Activated T-helper 1 cell treated with anti-CD3 and anti-CD28 coated beads, Interleukin-12 subunit alpha, Interleukin-12 subunit beta, Interleukin-2, Interleukin-4 antibody, amounts not matched to agents 30 ng/mL and 10 ng/mL and 1 ng/mL, durations not matched to agents 14 hours and 24 hours and 36 hours (primary cell): ENCODE measurements at regions of chr1 and their contacts with region 1.

Region 1: DNA sequence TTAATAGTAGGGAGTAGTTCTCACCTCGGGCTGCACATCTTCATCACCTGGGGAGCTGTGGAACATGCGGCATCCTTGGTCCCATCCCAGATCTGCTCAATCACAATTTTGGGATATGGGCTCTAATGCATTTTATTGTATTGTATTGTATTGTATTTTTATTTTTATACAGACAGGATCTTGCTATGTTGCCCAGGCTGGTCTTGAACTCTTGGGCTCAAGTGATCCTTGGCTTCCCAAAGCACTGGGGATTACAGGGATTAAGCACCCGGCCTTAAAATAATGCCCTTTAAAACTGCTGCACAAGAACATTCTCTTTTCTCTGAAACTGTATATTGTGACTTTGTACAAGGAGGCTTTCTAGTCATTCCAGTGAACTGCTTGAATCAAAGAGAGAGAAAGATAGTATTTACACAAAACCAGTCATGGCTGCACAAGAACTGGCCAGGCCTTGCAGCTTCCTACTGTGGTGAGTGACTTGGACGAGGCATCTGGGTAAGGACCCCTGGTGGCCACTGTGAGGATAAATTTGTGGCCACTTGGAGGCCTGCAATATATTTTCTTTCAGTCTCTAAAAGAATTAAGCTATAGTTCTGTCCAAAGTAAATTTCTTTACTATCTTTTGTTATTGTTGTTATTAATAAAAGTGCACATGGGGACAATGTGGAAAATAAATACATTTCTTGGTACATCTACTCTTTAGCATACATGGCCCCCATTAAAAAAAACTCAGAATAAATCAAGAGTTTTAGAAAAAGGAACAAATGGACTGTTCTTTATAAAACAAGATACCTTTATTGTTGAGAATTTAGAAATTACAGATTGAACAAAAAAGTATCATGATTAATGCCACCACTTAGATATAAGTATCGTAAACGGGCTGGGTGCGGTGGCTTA is 48.0 kb downstream of the TBCE start:
- DNase-seq: peak; percentile 36
- H3K4me3 Mint-ChIP-seq: no peak overlapping the region
- H3K27ac Mint-ChIP-seq: no peak overlapping the region
- H3K4me1 Mint-ChIP-seq: no peaks in the 10 kb centered on the region
- H3K27me3 Mint-ChIP-seq: no peaks in the 10 kb centered on the region

Region 2: DNA sequence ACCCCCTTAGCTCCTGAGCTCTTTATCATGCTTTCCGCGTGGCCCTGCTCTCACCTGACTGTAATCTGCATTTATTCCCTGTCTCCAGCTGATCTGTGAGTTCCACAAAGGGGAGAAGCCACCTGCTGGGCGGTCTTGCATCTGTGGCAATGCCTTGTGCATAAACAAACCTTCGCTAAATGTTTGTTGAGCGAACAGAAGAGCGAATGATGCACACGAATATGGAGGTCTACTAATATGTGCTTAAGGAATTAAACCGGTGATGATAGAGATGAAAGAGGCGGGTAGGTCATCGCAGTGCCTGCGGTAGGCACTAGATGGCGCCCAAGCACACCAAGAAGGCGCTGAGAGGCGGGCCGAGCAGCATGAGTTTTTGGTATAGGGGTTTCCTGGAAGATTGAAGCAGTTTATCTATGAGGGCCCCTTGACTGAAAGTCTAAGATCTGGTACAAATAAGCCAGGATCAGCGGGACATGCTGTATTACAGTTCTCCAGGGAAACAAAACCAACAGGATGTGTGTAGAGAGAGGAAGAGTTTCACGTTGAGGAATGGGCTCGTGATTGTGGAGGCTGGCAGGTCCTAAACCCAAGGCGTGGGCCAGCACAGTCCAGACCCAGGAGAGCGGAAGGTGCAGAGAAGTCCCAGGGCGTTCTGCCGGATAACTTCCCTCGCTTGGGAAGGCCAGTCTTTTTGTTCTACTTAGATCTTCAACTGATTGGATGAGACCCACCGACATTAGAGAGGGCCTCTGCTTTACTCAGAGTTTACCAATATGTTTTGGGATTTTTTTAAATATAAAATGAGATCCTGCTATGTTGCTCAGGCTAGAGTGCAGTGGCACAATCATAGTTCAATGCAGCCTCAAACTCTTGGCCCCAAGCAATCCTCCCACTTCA is 321.3 kb before region 1 on chr1:
- intact Hi-C with region 1: loop called (anchors 1 kb)
- DNase-seq: peak; percentile 69
- H3K4me3 Mint-ChIP-seq: no peak overlapping the region
- H3K27ac Mint-ChIP-seq: peak overlapping the region; percentile 31
- H3K4me1 Mint-ChIP-seq: peaks cover 13% of the 10 kb centered on the region
- H3K27me3 Mint-ChIP-seq: no peaks in the 10 kb centered on the region

Region 3: GRCh38 chr1:235160957-235161684 is 254.1 kb before region 1 on chr1 and contains the start of gene RBM34:
- intact Hi-C with region 1: loop called (anchors 1 kb)
- DNase-seq: peak; percentile 92
- H3K4me3 Mint-ChIP-seq: peak within 1 kb of the TSS; percentile 98
- H3K27ac Mint-ChIP-seq: peak within 1 kb of the TSS; percentile 97
- H3K4me1 Mint-ChIP-seq: peaks cover 16% of the 10 kb centered on the region
- H3K27me3 Mint-ChIP-seq: no peaks in the 10 kb centered on the region
- total RNA-seq, gene RBM34: 120 and 127 TPM in 2 replicates

Region 4: GRCh38 chr1:235253219-235253962 is 161.9 kb before region 1 on chr1:
- intact Hi-C with region 1: loop called (anchors 1 kb)
- DNase-seq: peak; percentile 47
- H3K4me3 Mint-ChIP-seq: no peak overlapping the region
- H3K27ac Mint-ChIP-seq: no peak overlapping the region
- H3K4me1 Mint-ChIP-seq: peaks cover 37% of the 10 kb centered on the region
- H3K27me3 Mint-ChIP-seq: no peaks in the 10 kb centered on the region